AG04449 (cell line): ENCODE measurements at regions of chr7 and their contacts with region 1.

Region 1: GRCh38 chr7:151759591-151760042 is 117.3 kb downstream of the PRKAG2 start:
- DNase-seq: no peak
- H3K4me3 ChIP-seq: no peak overlapping the region
- CTCF ChIP-seq: peak; percentile 86

Region 2: GRCh38 chr7:151068068-151068773 is 691.4 kb before region 1 on chr7:
- CTCF ChIA-PET with region 1: no interaction called
- POLR2A ChIA-PET with region 1: no interaction called
- DNase-seq: peak; percentile 36
- H3K4me3 ChIP-seq: no peak overlapping the region
- CTCF ChIP-seq: no peak

Region 3: DNA sequence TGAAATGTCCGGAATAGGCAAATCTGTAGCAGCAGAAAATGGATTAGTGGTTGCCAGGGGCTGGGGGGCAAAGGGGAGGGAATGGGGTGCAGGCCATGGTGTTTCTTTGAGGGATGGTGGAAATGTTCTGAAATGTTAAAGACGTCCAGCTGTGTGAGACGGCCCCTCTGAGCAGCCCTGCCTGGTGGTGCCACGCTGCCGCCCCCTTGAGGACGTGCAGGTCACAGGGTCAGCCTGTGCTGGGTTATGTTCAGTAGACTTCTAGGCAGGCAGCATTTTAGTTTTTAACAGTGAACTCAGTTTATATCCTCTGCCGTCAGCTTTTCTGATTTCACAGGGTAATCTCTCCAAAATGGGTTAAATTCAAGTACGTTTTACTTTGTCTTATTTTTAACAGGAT is 408.6 kb before region 1 on chr7:
- CTCF ChIA-PET with region 1: interaction called, 14 read pairs
- POLR2A ChIA-PET with region 1: no interaction called
- DNase-seq: no peak
- H3K4me3 ChIP-seq: no peak overlapping the region
- CTCF ChIP-seq: peak; percentile 1

Region 4: GRCh38 chr7:151459726-151460473 is 299.7 kb before region 1 on chr7:
- CTCF ChIA-PET with region 1: interaction called, 19 read pairs
- POLR2A ChIA-PET with region 1: no interaction called
- DNase-seq: peak; percentile 79
- H3K4me3 ChIP-seq: peak overlapping the region; percentile 44
- CTCF ChIP-seq: peak; percentile 58

Region 5: GRCh38 chr7:151558575-151558974 is 201.0 kb before region 1 on chr7:
- CTCF ChIA-PET with region 1: interaction called, 29 read pairs
- POLR2A ChIA-PET with region 1: no interaction called
- DNase-seq: peak; percentile 61
- H3K4me3 ChIP-seq: no peak overlapping the region
- CTCF ChIP-seq: no peak

Region 6: GRCh38 chr7:151660141-151660540 is 99.5 kb before region 1 on chr7:
- CTCF ChIA-PET with region 1: interaction called, 10 read pairs
- POLR2A ChIA-PET with region 1: no interaction called
- DNase-seq: no peak
- H3K4me3 ChIP-seq: no peak overlapping the region
- CTCF ChIP-seq: no peak

Region 7: GRCh38 chr7:151775547-151776443 is 16.2 kb after region 1 on chr7:
- CTCF ChIA-PET with region 1: interaction called, 47 read pairs
- POLR2A ChIA-PET with region 1: no interaction called
- DNase-seq: no peak
- H3K4me3 ChIP-seq: no peak overlapping the region
- CTCF ChIP-seq: no peak

Region 8: DNA sequence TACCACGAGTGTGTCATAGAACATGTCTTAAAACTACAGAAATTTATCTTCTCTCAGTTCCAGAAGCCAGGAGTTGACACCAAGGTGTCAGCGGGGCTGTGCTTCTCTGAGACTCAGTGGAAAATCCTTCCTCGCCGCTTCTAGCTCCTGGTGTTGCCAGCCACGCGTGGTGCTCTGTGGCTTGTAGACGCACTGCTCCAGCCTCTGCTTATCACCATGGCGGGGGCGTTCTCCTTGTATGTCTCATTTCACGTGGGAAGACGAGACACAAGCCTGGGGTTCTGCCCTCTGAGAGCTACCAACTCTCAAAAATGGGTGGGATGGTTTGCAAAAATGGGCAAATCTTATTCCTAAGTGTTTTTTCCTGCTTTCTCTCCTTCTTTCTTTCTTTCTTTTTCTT is 185.6 kb after region 1 on chr7:
- CTCF ChIA-PET with region 1: no interaction called
- POLR2A ChIA-PET with region 1: no interaction called
- DNase-seq: no peak
- H3K4me3 ChIP-seq: no peak overlapping the region
- CTCF ChIP-seq: no peak